ENCODE measurements at regions of chr2 and their contacts with region 1.

Region 1: GRCh38 chr2:226079671-226080181 is 680.2 kb downstream of the NYAP2 start:
- DNase-seq: no peak
- ATAC-seq: no peak
- H3K4me3 ChIP-seq: no peak overlapping the region
- H3K27ac ChIP-seq: no peak overlapping the region
- H3K4me1 ChIP-seq: peaks cover 5% of the 10 kb centered on the region; the same call in 1 of the 2 replicates
- H3K27me3 ChIP-seq: no peaks in the 10 kb centered on the region
- CTCF ChIP-seq: no peak
- EP300 ChIP-seq: no peak
- POLR2A ChIP-seq: no peak
- RAD21 ChIP-seq: no peak

Region 2: GRCh38 chr2:226011716-226012450 is 67.8 kb before region 1 on chr2:
- CTCF ChIA-PET with region 1: no interaction called
- POLR2A ChIA-PET with region 1: no interaction called
- in situ Hi-C with region 1: no loop called
- intact Hi-C with region 1: no loop called
- DNase-seq: no peak
- ATAC-seq: no peak
- H3K4me3 ChIP-seq: no peak overlapping the region
- H3K27ac ChIP-seq: no peak overlapping the region
- H3K4me1 ChIP-seq: no peaks in the 10 kb centered on the region
- H3K27me3 ChIP-seq: no peaks in the 10 kb centered on the region; a peak in 1 of 5 replicates
- CTCF ChIP-seq: no peak
- EP300 ChIP-seq: no peak
- POLR2A ChIP-seq: no peak
- RAD21 ChIP-seq: no peak

Region 3: DNA sequence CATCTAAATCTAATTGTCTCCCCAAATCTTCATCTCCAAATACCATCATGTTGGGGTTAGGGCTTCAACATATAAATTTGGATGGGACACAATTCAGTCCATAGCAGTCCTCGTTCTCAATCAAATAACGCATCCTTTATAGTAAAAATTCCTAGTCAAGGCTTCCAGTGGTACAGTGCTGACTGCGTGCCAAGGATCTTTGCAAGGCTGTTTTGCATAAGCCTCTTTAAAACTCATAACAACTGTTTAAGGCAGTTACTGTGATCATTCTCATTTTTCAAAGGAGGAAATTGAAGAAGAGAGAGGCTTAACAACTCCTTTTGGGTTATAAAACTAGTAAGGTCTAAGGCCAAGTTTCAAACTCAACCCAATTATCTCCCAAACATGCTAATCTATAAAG is 13.3 kb before region 1 on chr2:
- CTCF ChIA-PET with region 1: no interaction called
- POLR2A ChIA-PET with region 1: no interaction called
- in situ Hi-C with region 1: no loop called
- intact Hi-C with region 1: loop called (anchors 2 kb)
- DNase-seq: no peak
- ATAC-seq: no peak
- H3K4me3 ChIP-seq: no peak overlapping the region
- H3K27ac ChIP-seq: no peak overlapping the region
- H3K4me1 ChIP-seq: no peaks in the 10 kb centered on the region
- H3K27me3 ChIP-seq: no peaks in the 10 kb centered on the region; a peak in 1 of 5 replicates
- CTCF ChIP-seq: no peak
- EP300 ChIP-seq: no peak
- POLR2A ChIP-seq: no peak
- RAD21 ChIP-seq: no peak

Region 4: GRCh38 chr2:226098861-226099745 is 19.4 kb after region 1 on chr2:
- CTCF ChIA-PET with region 1: no interaction called
- POLR2A ChIA-PET with region 1: no interaction called
- in situ Hi-C with region 1: no loop called
- intact Hi-C with region 1: loop called (anchors 1 kb)
- DNase-seq: no peak
- ATAC-seq: no peak
- H3K4me3 ChIP-seq: no peak overlapping the region
- H3K27ac ChIP-seq: no peak overlapping the region
- H3K4me1 ChIP-seq: no peaks in the 10 kb centered on the region
- H3K27me3 ChIP-seq: no peaks in the 10 kb centered on the region
- CTCF ChIP-seq: no peak
- EP300 ChIP-seq: no peak
- POLR2A ChIP-seq: no peak
- RAD21 ChIP-seq: no peak

Region 5: DNA sequence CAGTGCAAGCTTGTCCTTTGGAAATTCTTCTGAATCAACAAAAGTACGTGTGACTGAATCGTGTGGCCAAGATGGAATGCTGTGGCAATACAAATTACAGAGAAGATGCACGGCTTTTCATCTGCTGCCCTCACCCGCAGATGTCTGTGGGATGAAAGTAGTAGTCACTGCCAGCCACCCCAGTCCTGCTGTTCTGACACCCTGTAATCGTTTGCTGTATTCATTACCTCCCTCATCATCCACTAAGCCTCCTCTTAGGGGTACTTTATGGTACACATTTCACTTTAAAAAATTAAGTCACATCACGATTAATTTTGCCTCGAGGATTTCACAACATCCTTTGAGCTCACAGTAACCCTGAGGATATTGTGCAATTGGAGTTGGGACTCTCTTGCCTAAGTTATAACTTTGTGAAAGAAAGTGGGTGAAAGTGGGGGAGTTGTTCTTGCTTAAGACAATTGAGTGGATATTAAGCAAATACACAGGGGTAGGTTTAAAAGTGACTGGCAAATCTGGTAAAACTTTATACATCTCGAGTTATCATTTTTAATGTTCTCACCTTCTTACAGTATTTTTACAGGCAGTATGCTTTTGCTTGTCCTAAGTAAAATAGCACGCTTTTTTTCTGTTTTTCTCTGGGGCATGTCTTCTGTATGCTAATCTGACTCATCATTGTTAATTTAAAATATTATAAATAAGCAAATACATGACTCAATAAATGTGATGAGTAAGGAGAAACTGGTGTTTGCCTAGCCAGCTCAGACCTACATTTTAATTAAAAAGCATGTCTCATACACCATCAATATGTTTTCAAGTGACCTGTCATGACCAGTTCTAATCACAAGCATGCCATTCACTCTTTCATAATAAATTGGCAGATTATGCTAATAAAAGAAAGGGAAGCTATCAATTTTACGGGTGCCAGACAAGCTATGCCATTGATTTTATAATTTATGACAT is 39.0 kb after region 1 on chr2:
- CTCF ChIA-PET with region 1: no interaction called
- POLR2A ChIA-PET with region 1: no interaction called
- in situ Hi-C with region 1: no loop called
- intact Hi-C with region 1: no loop called
- DNase-seq: peak; percentile 81
- ATAC-seq: peak; percentile 81
- H3K4me3 ChIP-seq: peak overlapping the region; percentile 42 to 51 (median 42); a peak in 5 of 6 replicates
- H3K27ac ChIP-seq: peak overlapping the region; percentile 54
- H3K4me1 ChIP-seq: peaks cover 65% of the 10 kb centered on the region
- H3K27me3 ChIP-seq: no peaks in the 10 kb centered on the region
- CTCF ChIP-seq: no peak
- EP300 ChIP-seq: peak; percentile 88 to 94; a peak in 3 of 4 replicates
- POLR2A ChIP-seq: no peak
- RAD21 ChIP-seq: no peak

Region 6: DNA sequence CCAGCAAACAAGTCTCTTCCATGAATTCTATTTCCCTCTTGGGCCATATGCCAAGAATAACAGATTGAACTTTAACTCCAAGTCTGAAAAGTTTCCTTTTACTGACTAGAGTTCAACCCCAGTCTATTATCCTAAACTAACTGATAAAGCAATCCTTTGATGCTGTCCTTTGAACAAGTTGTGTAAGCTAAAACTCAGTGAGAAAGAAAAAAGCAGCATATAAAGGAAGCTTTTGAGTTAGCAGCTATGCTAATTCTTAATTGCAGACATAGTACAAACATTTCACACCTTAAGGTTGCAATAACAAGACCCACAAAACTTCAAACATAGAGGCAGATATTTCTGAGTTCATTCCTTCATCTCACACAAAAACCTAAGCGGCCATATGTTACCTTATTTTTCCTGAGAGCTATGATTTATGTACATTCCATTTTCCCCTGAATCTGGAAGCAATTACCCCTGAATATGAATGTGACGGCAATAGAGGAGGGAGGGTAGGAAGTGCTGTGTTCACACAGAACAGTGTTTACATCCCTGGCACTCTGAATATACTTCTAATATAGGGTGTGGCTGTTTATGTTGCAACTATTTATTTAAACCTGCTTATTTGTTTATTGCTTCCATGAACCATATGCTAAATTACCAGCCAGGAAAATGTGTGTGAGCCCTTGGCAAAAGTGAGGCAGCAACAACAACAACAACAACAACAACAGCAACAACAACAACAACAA is 539.3 kb after region 1 on chr2:
- CTCF ChIA-PET with region 1: no interaction called
- POLR2A ChIA-PET with region 1: no interaction called
- in situ Hi-C with region 1: no loop called
- intact Hi-C with region 1: no loop called
- DNase-seq: peak; percentile 98
- ATAC-seq: peak; percentile 86
- H3K4me3 ChIP-seq: peak overlapping the region in 1 of 3 experiments; percentile 18; a peak in 1 of 6 replicates
- H3K27ac ChIP-seq: peak overlapping the region; percentile 75
- H3K4me1 ChIP-seq: peaks cover 66% of the 10 kb centered on the region
- H3K27me3 ChIP-seq: no peaks in the 10 kb centered on the region
- CTCF ChIP-seq: no peak
- EP300 ChIP-seq: peak; percentile 26 to 100; a peak in 2 of 4 replicates
- POLR2A ChIP-seq: no peak
- RAD21 ChIP-seq: no peak